SK-N-SH (cell line): ENCODE measurements at regions of chr3 and their contacts with region 1.

Region 1: GRCh38 chr3:187702507-187703033 is at the start of gene RTP2:
- DNase-seq: no peak
- H3K4me3 ChIP-seq: no peak within 1 kb of the TSS
- H3K27ac ChIP-seq: no peak within 1 kb of the TSS
- H3K4me1 ChIP-seq: no peaks in the 10 kb centered on the region
- H3K27me3 ChIP-seq: peaks cover 17% of the 10 kb centered on the region; the same call in 1 of the 2 replicates
- CTCF ChIP-seq: no peak
- EP300 ChIP-seq: no peak
- RAD21 ChIP-seq: no peak
- polyA plus RNA-seq, gene RTP2: 0.07 TPM in 1 of 2 replicates, not detected in the other

Region 2: DNA sequence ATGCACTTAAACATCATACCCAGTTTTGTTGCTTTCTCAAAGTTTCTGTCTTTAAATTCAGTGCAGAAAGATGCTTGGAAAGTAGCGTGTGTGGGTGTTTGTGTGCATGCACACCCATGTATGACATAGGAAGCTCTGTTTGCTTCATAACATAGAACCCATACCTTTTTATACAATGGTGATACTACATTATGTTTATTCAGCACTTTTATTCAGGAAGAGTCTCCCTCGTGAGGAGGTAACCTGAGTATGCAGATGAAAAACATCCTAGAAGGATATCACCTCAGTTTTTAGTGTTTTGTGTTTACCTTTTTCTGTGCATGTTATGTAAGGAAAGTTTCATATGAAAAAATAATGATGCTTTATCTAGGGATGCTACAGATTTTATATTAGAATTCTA is 143.6 kb before region 1 on chr3:
- CTCF ChIA-PET with region 1: no interaction called
- POLR2A ChIA-PET with region 1: no interaction called
- DNase-seq: no peak
- H3K4me3 ChIP-seq: no peak overlapping the region
- H3K27ac ChIP-seq: no peak overlapping the region
- H3K4me1 ChIP-seq: no peaks in the 10 kb centered on the region
- H3K27me3 ChIP-seq: no peaks in the 10 kb centered on the region; the same call in 1 of the 2 replicates
- CTCF ChIP-seq: no peak
- EP300 ChIP-seq: no peak
- RAD21 ChIP-seq: no peak

Region 3: GRCh38 chr3:187689984-187690383 is 12.6 kb before region 1 on chr3:
- CTCF ChIA-PET with region 1: no interaction called
- POLR2A ChIA-PET with region 1: no interaction called
- DNase-seq: no peak
- H3K4me3 ChIP-seq: no peak overlapping the region
- H3K27ac ChIP-seq: no peak overlapping the region
- H3K4me1 ChIP-seq: no peaks in the 10 kb centered on the region
- H3K27me3 ChIP-seq: peaks cover 30% of the 10 kb centered on the region; the same call in 1 of the 2 replicates
- CTCF ChIP-seq: no peak
- EP300 ChIP-seq: no peak
- RAD21 ChIP-seq: no peak

Region 4: GRCh38 chr3:187714404-187714979 is 11.9 kb after region 1 on chr3:
- CTCF ChIA-PET with region 1: interaction called, 22 read pairs
- POLR2A ChIA-PET with region 1: no interaction called
- DNase-seq: peak; percentile 65
- H3K4me3 ChIP-seq: peak overlapping the region in 1 of 2 experiments; percentile 2; a peak in 1 of 4 replicates
- H3K27ac ChIP-seq: no peak overlapping the region
- H3K4me1 ChIP-seq: no peaks in the 10 kb centered on the region
- H3K27me3 ChIP-seq: no peaks in the 10 kb centered on the region; the same call in 1 of the 2 replicates
- CTCF ChIP-seq: peak; percentile 91
- EP300 ChIP-seq: no peak
- RAD21 ChIP-seq: peak; percentile 88

Region 5: GRCh38 chr3:187828579-187829452 is 126.2 kb after region 1 on chr3:
- CTCF ChIA-PET with region 1: no interaction called
- POLR2A ChIA-PET with region 1: no interaction called
- DNase-seq: no peak
- H3K4me3 ChIP-seq: no peak overlapping the region
- H3K27ac ChIP-seq: no peak overlapping the region
- H3K4me1 ChIP-seq: no peaks in the 10 kb centered on the region
- H3K27me3 ChIP-seq: no peaks in the 10 kb centered on the region
- CTCF ChIP-seq: no peak
- EP300 ChIP-seq: no peak
- RAD21 ChIP-seq: no peak

Region 6: DNA sequence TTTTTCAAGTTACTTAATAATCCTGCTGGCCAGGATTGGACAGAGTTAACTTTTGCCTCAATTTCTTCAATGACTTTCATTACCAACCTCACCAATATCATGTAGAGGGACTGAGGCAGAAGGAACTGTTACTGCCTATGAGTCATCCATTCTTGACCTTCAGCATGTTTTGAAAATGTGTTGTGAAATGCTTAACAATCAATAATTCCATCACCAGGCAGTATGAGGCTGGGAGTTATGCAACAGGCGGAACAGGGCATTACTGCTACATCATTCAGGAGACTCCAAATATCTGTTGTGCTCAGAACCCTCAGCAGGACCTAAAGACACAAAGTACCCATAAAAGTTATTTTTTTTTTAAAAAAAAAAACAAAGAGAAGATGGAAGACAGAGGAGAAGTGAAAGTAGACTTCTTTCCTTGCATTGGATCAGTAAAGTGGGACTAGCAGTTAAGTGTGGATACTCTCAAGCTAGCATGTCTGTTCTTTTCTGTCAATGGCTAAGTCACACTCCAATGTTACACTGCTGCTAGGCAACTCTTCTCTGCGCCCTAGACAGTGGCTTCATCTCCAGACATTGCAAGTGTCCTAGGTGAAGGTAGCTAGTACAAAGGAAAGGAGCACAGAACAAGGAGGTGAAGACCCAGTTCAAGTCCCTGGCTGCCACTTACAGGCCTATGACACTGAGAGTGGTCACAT is 266.5 kb after region 1 on chr3:
- CTCF ChIA-PET with region 1: no interaction called
- POLR2A ChIA-PET with region 1: no interaction called
- DNase-seq: no peak
- H3K4me3 ChIP-seq: no peak overlapping the region
- H3K27ac ChIP-seq: no peak overlapping the region
- H3K4me1 ChIP-seq: no peaks in the 10 kb centered on the region
- H3K27me3 ChIP-seq: no peaks in the 10 kb centered on the region
- CTCF ChIP-seq: no peak
- EP300 ChIP-seq: no peak
- RAD21 ChIP-seq: no peak